ENCODE measurements at regions of chr3 and their contacts with region 1.

Region 1: DNA sequence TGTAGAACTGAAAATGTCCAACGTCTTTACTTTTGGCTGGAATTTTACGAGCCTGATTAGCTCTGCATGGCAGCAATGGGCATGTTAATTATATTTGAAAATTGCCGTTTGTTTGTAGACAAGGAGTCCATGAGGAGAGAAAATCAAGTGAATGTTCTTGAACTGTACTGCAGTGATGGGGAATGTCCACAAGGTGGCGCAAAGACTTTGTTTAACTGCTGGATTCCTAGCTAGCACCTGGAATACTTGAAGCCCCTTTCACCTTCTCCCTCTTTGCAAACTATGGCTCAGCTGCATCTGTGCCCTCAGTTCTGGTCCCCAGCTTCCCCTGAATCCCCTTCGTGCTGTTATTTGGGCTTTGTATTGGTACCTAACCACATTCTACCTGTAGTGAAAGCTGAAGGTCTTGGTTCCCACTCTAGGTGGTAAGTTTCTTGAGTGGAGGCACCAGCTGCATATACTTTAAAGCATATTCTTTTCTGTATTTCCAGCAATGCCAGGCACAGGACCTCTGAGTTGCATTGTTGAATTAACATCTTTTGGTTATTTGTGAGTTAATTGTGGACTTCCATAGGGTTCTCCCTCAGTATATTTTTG is 25.3 kb downstream of the EXOG start:
- DNase-seq: peak; percentile 47 to 73
- ATAC-seq: peak; percentile 63 to 82; a peak in 5 of 6 replicates
- H3K4me3 ChIP-seq: no peak overlapping the region
- H3K27ac ChIP-seq: no peak overlapping the region
- H3K4me1 ChIP-seq: no peaks in the 10 kb centered on the region; the same call in 2 of the 3 replicates
- CTCF ChIP-seq: peak; percentile 94
- EP300 ChIP-seq: no peak
- POLR2A ChIP-seq: no peak
- RAD21 ChIP-seq: peak; percentile 69 to 78

Region 2: GRCh38 chr3:38421679-38422336 is 99.7 kb before region 1 on chr3:
- CTCF ChIA-PET with region 1: no interaction called
- POLR2A ChIA-PET with region 1: no interaction called
- DNase-seq: no peak
- ATAC-seq: no peak
- H3K4me3 ChIP-seq: no peak overlapping the region
- H3K27ac ChIP-seq: no peak overlapping the region
- H3K4me1 ChIP-seq: no peaks in the 10 kb centered on the region
- CTCF ChIP-seq: no peak
- EP300 ChIP-seq: no peak
- POLR2A ChIP-seq: no peak
- RAD21 ChIP-seq: no peak

Region 3: GRCh38 chr3:38458796-38459498 is 62.5 kb before region 1 on chr3:
- CTCF ChIA-PET with region 1: no interaction called
- POLR2A ChIA-PET with region 1: no interaction called
- DNase-seq: no peak
- ATAC-seq: no peak
- H3K4me3 ChIP-seq: no peak overlapping the region
- H3K27ac ChIP-seq: no peak overlapping the region
- H3K4me1 ChIP-seq: peaks cover 6% of the 10 kb centered on the region; the same call in 2 of the 3 replicates
- CTCF ChIP-seq: no peak
- EP300 ChIP-seq: no peak
- POLR2A ChIP-seq: no peak
- RAD21 ChIP-seq: no peak

Region 4: GRCh38 chr3:38496131-38496910 is 25.2 kb before region 1 on chr3 and contains the start of gene EXOG:
- CTCF ChIA-PET with region 1: interaction called, 31 read pairs
- POLR2A ChIA-PET with region 1: interaction called, 4 read pairs
- DNase-seq: peak; percentile 93 to 98
- ATAC-seq: peak; percentile 96 to 99
- H3K4me3 ChIP-seq: peak within 1 kb of the TSS; percentile 64
- H3K27ac ChIP-seq: peak within 1 kb of the TSS; percentile 79 to 87
- H3K4me1 ChIP-seq: peaks cover 6% of the 10 kb centered on the region; the same call in 1 of the 3 replicates
- CTCF ChIP-seq: peak; percentile 79
- EP300 ChIP-seq: no peak
- POLR2A ChIP-seq: peak; percentile 54
- RAD21 ChIP-seq: peak; percentile 55 to 70
- polyA plus RNA-seq, gene EXOG: 16.6 and 17.1 TPM in 2 replicates

Region 5: DNA sequence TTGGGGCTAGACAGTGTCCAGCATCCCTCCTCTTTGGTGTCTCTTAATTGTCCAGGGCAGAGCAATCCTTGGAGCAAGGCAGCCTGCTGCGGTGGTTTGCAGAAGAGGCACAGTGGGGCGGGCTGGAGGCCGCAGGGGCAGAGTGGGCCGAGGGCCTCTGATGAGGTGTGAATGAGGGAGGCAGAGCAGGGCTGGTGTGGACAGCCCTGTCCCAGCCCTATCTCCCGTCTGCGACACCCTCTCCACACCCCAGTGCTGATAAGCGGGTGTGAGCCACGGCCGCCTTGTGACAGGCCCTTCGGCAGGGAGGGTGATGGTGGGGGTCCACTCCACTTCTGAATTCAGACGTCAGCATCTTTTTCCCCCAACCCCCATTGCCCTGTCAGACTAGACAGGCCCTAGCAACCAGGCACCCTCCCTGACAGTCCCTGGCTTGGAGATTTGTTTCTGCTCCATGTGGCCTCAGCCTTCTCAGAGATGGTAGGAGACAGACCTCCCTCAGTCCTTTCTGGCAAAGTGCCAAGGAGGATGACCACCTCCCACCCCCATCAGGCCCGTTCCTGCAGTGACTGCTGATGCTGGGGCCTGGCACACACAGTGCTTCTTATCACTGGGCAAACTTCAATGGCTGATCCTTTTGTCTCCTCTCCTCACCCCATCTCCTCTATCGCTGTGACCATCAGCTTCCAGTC is 11.9 kb after region 1 on chr3:
- CTCF ChIA-PET with region 1: interaction called, 24 read pairs
- POLR2A ChIA-PET with region 1: no interaction called
- DNase-seq: no peak
- ATAC-seq: peak in 1 of 2 experiments; percentile 36; a peak in 2 of 6 replicates
- H3K4me3 ChIP-seq: no peak overlapping the region
- H3K27ac ChIP-seq: no peak overlapping the region
- H3K4me1 ChIP-seq: no peaks in the 10 kb centered on the region
- CTCF ChIP-seq: no peak
- EP300 ChIP-seq: no peak
- POLR2A ChIP-seq: no peak
- RAD21 ChIP-seq: no peak

Region 6: GRCh38 chr3:38634111-38634510 is 112.6 kb after region 1 on chr3:
- CTCF ChIA-PET with region 1: interaction called, 12 read pairs
- POLR2A ChIA-PET with region 1: no interaction called
- DNase-seq: no peak
- ATAC-seq: no peak
- H3K4me3 ChIP-seq: no peak overlapping the region
- H3K27ac ChIP-seq: no peak overlapping the region
- H3K4me1 ChIP-seq: no peaks in the 10 kb centered on the region
- CTCF ChIP-seq: no peak
- EP300 ChIP-seq: no peak
- POLR2A ChIP-seq: no peak
- RAD21 ChIP-seq: no peak

Region 7: GRCh38 chr3:38843898-38844297 is 322.4 kb after region 1 on chr3:
- CTCF ChIA-PET with region 1: interaction called, 82 read pairs
- POLR2A ChIA-PET with region 1: no interaction called
- DNase-seq: peak in 1 of 2 experiments; percentile 46
- ATAC-seq: peak; percentile 93 to 94
- H3K4me3 ChIP-seq: no peak overlapping the region
- H3K27ac ChIP-seq: no peak overlapping the region
- H3K4me1 ChIP-seq: no peaks in the 10 kb centered on the region
- CTCF ChIP-seq: peak; percentile 53
- EP300 ChIP-seq: no peak
- POLR2A ChIP-seq: no peak
- RAD21 ChIP-seq: peak; percentile 72 to 80

Region 8: DNA sequence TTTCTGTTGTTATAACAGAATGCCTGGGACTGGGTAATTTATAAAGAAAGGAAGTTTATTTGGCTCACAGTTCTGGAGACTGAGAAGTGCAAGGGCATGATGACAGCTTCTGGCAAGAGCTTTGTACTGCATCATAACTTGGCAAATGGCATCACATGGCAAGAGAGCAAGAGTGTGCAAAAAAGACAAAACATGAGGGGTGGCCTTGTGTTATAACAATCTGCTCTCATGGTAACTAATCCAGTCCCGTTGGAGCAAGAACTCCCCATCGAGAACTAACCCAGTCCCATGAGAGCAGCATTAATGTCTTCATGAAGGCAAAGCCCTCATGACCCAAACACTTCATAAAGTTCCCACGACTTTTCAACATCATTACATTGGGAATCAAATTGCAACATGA is 507.1 kb after region 1 on chr3:
- CTCF ChIA-PET with region 1: interaction called, 14 read pairs
- POLR2A ChIA-PET with region 1: no interaction called
- DNase-seq: no peak
- ATAC-seq: no peak
- H3K4me3 ChIP-seq: no peak overlapping the region
- H3K27ac ChIP-seq: no peak overlapping the region
- H3K4me1 ChIP-seq: no peaks in the 10 kb centered on the region
- CTCF ChIP-seq: no peak
- EP300 ChIP-seq: no peak
- POLR2A ChIP-seq: no peak
- RAD21 ChIP-seq: no peak